ENCODE measurements at regions of chr13 and their contacts with region 1.

Region 1: DNA sequence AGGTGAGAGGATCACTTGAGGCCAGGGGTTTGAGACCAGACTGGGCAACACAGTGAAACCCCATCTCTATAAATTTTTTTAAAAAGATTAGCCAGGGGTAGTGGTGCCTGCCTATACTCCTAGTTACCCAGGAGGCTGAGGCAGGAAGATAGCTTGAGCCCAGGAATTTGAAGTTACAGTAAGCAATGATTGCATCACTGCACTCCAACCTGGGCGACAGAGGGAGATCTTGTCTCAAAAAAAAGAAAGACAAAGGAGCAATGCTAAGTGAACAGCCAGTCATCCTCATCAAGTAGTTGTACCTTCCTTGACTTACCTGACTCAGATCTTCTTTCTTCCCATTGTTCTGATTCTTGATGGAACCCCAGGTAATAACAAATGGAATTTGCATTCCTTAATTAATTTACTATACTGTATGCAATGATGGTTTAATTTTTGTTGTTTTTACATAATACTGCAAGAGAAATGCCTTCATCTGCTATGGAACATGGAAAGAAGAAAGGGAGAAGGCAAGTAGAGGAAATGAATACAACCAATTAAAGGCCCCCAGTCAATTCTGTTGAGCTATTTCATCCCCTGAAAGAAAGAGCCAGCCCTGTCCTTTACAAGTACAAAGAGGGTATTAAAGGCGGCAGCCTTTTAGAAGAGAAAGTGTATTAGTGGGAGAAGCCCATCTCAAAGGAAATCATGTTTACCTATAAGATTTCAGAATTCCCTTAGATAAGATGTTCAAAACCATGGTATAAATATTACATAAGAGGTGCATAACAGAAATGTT is 316.7 kb downstream of the DIAPH3 start:
- DNase-seq: peak; percentile 24 to 43
- H3K4me3 ChIP-seq: no peak overlapping the region
- H3K4me3 Mint-ChIP-seq: no peak overlapping the region
- H3K27ac Mint-ChIP-seq: no peak overlapping the region
- H3K4me1 ChIP-seq: peaks cover 58% of the 10 kb centered on the region
- H3K4me1 Mint-ChIP-seq: peaks cover 55% of the 10 kb centered on the region
- H3K27me3 ChIP-seq: no peaks in the 10 kb centered on the region
- H3K27me3 Mint-ChIP-seq: no peaks in the 10 kb centered on the region
- CTCF ChIP-seq: no peak

Region 2: DNA sequence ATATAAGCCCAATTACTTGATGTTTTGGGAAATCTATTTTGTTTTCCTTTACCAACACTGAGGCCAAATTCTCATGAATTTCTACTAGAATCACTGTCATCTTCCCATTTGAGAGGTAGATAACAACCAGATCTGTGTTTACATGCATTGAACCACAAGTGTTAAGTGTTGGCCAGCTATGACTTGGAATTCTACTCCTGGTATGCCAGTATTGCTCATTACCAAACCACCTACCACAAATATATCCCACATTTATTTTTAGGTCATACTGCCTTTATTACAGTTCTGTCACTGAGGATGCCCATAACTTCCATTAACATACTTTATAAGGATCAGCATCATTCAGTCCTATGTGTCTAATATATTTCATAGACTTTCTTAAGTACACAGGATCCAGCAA is 12.2 kb before region 1 on chr13:
- CTCF ChIA-PET with region 1: no interaction called
- POLR2A ChIA-PET with region 1: no interaction called
- intact Hi-C with region 1: loop called (anchors 1 kb)
- DNase-seq: no peak
- H3K4me3 ChIP-seq: no peak overlapping the region
- H3K4me3 Mint-ChIP-seq: peak overlapping the region; percentile 46
- H3K27ac Mint-ChIP-seq: peak overlapping the region; percentile 97
- H3K4me1 ChIP-seq: peaks cover 59% of the 10 kb centered on the region
- H3K4me1 Mint-ChIP-seq: peaks cover 28% of the 10 kb centered on the region
- H3K27me3 ChIP-seq: no peaks in the 10 kb centered on the region
- H3K27me3 Mint-ChIP-seq: no peaks in the 10 kb centered on the region
- CTCF ChIP-seq: no peak

Region 3: DNA sequence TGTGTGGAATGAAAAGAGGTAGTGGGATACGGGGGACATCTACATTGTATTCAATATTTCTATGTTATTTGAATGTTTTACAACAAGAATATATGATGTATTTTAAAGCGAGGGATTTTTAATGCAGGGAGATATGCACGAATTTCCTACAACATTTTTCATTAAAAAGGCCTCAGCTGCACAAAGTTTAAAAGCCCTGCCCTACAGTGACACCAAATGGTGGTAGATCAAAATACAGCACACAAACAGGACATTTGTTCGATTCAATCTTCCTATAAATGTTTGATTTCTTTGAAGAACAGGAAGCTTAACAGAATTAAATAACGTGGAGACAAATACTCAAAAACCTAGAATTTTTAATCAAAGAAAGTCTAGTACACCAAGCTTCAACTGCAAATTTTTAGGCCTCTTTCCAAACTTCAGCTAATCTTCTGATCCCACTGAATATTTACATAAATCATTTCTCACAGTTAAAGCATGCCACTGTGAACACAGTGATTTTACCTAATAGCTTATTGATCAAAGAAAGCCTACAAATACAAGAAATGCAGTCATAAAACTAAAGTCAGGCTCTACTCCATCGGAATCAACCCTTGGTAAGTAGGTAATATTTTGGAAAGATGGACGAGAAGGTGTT is 59.5 kb after region 1 on chr13:
- CTCF ChIA-PET with region 1: interaction called, 7 read pairs
- POLR2A ChIA-PET with region 1: no interaction called
- intact Hi-C with region 1: loop called (anchors 2 kb)
- DNase-seq: peak in 1 of 2 experiments; percentile 30
- H3K4me3 ChIP-seq: no peak overlapping the region
- H3K4me3 Mint-ChIP-seq: no peak overlapping the region
- H3K27ac Mint-ChIP-seq: no peak overlapping the region
- H3K4me1 ChIP-seq: peaks cover 11% of the 10 kb centered on the region; the same call in 1 of the 2 replicates
- H3K4me1 Mint-ChIP-seq: peaks cover 7% of the 10 kb centered on the region
- H3K27me3 ChIP-seq: no peaks in the 10 kb centered on the region
- H3K27me3 Mint-ChIP-seq: no peaks in the 10 kb centered on the region
- CTCF ChIP-seq: peak; percentile 66 to 67

Region 4: DNA sequence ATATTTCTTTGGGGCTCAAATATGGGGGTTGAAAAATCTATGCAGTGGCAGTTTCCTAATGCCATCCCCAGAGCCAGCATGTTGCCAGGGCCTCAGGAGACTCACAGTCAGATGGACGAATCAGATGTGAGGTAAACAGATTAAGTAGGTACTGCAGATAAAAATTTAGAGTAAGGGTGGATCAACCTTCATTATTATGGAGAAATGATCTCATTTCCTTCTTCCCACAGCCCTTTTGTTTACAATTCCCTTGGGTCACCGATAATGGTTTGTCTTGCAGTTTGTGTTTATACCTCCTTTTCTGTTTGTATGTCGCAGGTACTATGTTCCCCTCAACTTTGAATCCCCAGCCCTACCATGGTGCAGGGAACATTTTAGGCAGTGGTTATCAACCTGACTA is 296.7 kb after region 1 on chr13:
- CTCF ChIA-PET with region 1: no interaction called
- POLR2A ChIA-PET with region 1: no interaction called
- intact Hi-C with region 1: loop called (anchors 10 kb)
- DNase-seq: no peak
- H3K4me3 ChIP-seq: no peak overlapping the region
- H3K4me3 Mint-ChIP-seq: no peak overlapping the region
- H3K27ac Mint-ChIP-seq: no peak overlapping the region
- H3K4me1 ChIP-seq: peaks cover 76% of the 10 kb centered on the region
- H3K4me1 Mint-ChIP-seq: peaks cover 45% of the 10 kb centered on the region
- H3K27me3 ChIP-seq: no peaks in the 10 kb centered on the region
- H3K27me3 Mint-ChIP-seq: no peaks in the 10 kb centered on the region
- CTCF ChIP-seq: no peak

Region 5: DNA sequence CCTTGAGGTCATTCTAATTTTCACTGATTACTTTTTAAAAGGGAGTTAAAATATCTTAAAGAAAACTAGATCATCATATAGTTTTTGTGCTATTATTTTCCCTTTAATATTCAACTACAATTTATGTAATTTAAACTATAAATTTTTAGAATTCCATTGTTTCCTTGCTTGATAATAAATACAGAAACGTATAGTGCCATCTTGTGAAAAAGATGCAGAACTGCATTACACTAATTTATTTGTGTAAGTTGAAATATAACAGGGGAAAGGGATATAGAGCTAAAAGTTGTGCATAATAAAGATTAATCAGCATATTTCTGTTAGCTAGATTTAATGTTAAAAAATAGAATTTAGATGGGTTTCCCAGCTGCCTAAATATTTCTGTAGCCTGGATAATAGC is 488.5 kb after region 1 on chr13:
- CTCF ChIA-PET with region 1: no interaction called
- POLR2A ChIA-PET with region 1: no interaction called
- intact Hi-C with region 1: loop called (anchors 2 kb)
- DNase-seq: no peak
- H3K4me3 ChIP-seq: no peak overlapping the region
- H3K4me3 Mint-ChIP-seq: no peak overlapping the region
- H3K27ac Mint-ChIP-seq: no peak overlapping the region
- H3K4me1 ChIP-seq: no peaks in the 10 kb centered on the region
- H3K4me1 Mint-ChIP-seq: no peaks in the 10 kb centered on the region
- H3K27me3 ChIP-seq: no peaks in the 10 kb centered on the region
- H3K27me3 Mint-ChIP-seq: peaks cover 4% of the 10 kb centered on the region
- CTCF ChIP-seq: peak; percentile 58 to 73

Measured in Caco-2 (cell line).